ENCODE measurements at regions of chr1 and their contacts with region 1.

Region 1: DNA sequence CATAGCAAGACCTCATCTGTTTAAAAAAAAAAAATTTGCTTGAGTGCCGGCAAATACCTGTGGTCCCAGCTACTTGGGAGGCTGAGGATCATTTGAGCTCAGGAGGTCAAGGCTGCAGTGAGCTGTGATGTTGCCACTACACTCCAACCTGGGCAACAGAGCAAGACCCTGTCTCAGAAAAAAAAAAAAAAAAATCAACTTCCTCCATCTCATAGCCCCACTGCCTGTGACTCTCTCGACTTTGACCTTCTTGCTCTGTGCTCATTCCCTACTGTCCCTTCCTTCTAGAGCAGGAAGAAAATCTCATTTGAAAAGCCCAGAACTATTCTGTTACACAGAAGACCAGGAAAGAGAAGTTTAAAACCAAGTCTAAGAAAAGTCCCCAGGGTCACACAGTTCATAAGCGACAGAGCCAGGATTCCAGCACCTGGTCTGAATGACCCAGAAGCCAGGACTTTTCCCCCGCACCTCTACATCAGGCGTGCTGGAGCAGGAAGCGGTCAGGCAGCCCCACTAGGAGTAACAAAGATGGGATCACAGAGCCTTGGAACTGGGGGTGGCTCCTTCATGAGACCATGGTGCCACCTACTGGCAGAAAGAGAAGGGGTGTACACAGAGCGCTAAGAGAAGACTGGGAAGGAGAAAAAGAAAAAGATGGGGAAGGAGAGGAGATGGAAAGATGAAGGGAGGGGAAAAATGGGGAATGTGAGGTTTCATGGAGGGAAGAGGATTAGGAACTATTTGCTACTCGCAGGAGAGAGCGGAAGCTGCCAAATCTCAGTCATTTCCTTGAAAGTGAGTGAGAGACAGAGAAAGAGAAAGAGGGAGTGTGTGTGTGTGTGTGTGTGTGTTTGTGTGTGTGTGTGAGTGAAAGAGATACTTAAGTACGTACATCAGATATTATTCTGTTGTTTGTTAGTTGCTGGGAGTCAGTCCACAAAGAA is 3.1 kb upstream of the P3R3URF start:
- DNase-seq: peak; percentile 88
- H3K4me3 ChIP-seq: peak overlapping the region in 1 of 3 experiments; percentile 36
- H3K27ac ChIP-seq: peak overlapping the region; percentile 79
- H3K4me1 ChIP-seq: peaks cover 49% of the 10 kb centered on the region
- H3K27me3 ChIP-seq: no peaks in the 10 kb centered on the region
- CTCF ChIP-seq: peak; percentile 86 to 98

Region 2: DNA sequence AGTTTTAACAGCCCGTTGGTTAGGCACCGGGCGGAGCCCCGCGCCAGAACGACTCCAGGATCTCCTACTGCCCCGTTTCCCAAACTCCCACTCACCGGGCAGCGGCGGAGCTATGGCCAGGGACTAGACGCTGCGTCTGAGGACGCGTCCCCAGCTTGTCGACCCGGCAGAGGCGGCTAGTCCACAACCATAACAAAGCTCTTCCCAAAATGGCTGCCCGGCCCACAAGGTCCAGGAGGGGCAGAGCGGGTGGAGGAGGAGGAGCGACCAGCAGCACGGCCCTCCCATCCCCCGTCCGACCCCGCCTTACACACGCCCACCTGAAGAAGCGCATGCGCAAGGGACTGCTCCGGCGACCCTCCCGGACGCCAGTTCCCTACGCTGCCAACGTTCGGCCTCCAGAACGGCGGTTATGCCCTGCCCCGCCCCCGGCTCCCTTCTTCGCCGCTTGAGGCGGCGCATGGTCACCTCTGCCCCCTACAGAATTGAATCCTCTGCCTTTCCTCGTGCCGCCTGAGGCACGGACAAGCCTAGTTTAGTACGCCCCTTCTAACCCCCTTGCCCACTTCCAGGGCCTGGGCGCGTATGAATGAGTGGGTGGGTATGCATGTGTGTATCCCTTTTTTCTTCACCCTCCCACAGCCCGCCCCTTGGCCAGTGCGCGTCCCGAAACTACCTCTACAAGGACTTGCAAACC is 492.9 kb before region 1 on chr1 and contains the start of gene GPBP1L1:
- CTCF ChIA-PET with region 1: no interaction called
- dilution Hi-C with region 1: no loop called
- in situ Hi-C with region 1: loop called in 1 of 2 experiments (anchors 25 kb)
- intact Hi-C with region 1: loop called (anchors 5 kb)
- DNase-seq: peak; percentile 93
- H3K4me3 ChIP-seq: peak within 1 kb of the TSS; percentile 94 to 99 (median 97)
- H3K27ac ChIP-seq: peak within 1 kb of the TSS; percentile 93
- H3K4me1 ChIP-seq: peaks cover 9% of the 10 kb centered on the region
- H3K27me3 ChIP-seq: no peaks in the 10 kb centered on the region
- CTCF ChIP-seq: no peak
- total RNA-seq, gene GPBP1L1: 109 to 119 TPM

Region 3: GRCh38 chr1:46036894-46037839 is 142.2 kb before region 1 on chr1:
- CTCF ChIA-PET with region 1: interaction called, 9 read pairs
- dilution Hi-C with region 1: no loop called
- in situ Hi-C with region 1: loop called (anchors 5 kb)
- intact Hi-C with region 1: loop called (anchors 1 kb)
- DNase-seq: peak; percentile 65
- H3K4me3 ChIP-seq: no peak overlapping the region
- H3K27ac ChIP-seq: no peak overlapping the region
- H3K4me1 ChIP-seq: peaks cover 8% of the 10 kb centered on the region
- H3K27me3 ChIP-seq: no peaks in the 10 kb centered on the region
- CTCF ChIP-seq: peak; percentile 96 to 98

Region 4: GRCh38 chr1:46113948-46114347 is 65.5 kb before region 1 on chr1:
- CTCF ChIA-PET with region 1: no interaction called
- dilution Hi-C with region 1: loop called (anchors 5 kb)
- in situ Hi-C with region 1: no loop called
- intact Hi-C with region 1: no loop called
- DNase-seq: no peak
- H3K4me3 ChIP-seq: no peak overlapping the region
- H3K27ac ChIP-seq: no peak overlapping the region
- H3K4me1 ChIP-seq: no peaks in the 10 kb centered on the region
- H3K27me3 ChIP-seq: no peaks in the 10 kb centered on the region
- CTCF ChIP-seq: no peak

Region 5: DNA sequence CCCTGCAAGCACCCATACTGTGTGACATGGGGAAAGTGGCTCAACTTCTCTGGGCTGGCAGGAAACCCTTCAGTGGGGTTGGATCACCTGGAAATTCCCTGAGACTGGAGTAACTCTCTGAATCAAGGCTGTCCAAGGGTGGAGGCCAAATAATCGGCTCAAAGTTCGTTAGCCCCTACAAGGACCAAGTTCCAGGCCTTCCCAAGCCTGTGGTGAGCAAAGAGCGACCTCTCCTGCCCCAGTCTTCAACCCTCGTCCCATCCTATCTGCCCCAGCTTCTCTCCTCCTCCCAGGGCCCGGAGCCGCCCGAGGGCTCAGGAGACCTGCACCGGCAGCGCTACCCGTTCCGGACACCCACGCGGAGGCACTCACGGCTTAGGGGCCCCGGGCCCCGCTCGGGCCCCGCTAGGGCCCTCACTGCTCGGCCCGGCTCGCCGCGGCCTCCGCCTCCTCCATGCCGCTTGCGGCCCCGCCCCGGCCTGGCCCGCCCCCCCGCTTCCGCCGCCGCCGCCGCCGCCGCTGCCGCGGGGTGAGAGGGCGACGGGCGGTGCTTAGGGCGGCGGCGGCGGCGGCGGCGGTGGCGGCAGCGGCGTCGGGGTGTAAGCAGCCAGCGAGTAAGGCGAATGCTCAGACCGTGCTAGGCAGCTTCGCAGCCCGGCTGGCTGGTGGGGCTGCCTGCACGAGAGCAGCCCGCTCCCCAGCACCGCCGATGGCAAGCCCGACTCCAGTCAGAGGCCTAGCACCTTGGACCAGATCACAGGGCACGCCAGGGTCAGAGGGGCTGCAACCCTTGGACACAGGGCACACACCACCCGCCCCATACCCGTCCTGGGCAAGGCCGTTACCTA is 18.8 kb after region 1 on chr1 and contains the start of gene POMGNT1:
- CTCF ChIA-PET with region 1: interaction called, 3 read pairs
- dilution Hi-C with region 1: no loop called
- in situ Hi-C with region 1: no loop called
- intact Hi-C with region 1: loop called (anchors 1 kb)
- DNase-seq: peak; percentile 71
- H3K4me3 ChIP-seq: peak within 1 kb of the TSS; percentile 79 to 92 (median 91)
- H3K27ac ChIP-seq: peak within 1 kb of the TSS; percentile 69
- H3K4me1 ChIP-seq: peaks cover 19% of the 10 kb centered on the region
- H3K27me3 ChIP-seq: no peaks in the 10 kb centered on the region
- CTCF ChIP-seq: peak in 1 of 2 donors; percentile 38
- total RNA-seq, gene POMGNT1: 92.5 to 144 TPM

Region 6: GRCh38 chr1:46223472-46223943 is 44.1 kb after region 1 on chr1:
- CTCF ChIA-PET with region 1: interaction called, 13 read pairs
- dilution Hi-C with region 1: no loop called
- in situ Hi-C with region 1: loop called in 1 of 2 experiments (anchors 5 kb)
- intact Hi-C with region 1: loop called (anchors 1 kb)
- DNase-seq: peak; percentile 92
- H3K4me3 ChIP-seq: no peak overlapping the region
- H3K27ac ChIP-seq: no peak overlapping the region
- H3K4me1 ChIP-seq: peaks cover 17% of the 10 kb centered on the region
- H3K27me3 ChIP-seq: no peaks in the 10 kb centered on the region
- CTCF ChIP-seq: peak; percentile 91 to 98

Region 7: GRCh38 chr1:46303038-46303871 is 123.8 kb after region 1 on chr1 and contains the starts of genes LRRC41 and UQCRH:
- CTCF ChIA-PET with region 1: no interaction called
- dilution Hi-C with region 1: no loop called
- in situ Hi-C with region 1: no loop called
- intact Hi-C with region 1: loop called (anchors 2 kb)
- DNase-seq: peak; percentile 93
- H3K4me3 ChIP-seq: peak within 1 kb of the TSS; percentile 69 to 98 (median 94)
- H3K27ac ChIP-seq: peak within 1 kb of the TSS; percentile 92
- H3K4me1 ChIP-seq: peaks cover 24% of the 10 kb centered on the region
- H3K27me3 ChIP-seq: no peaks in the 10 kb centered on the region
- CTCF ChIP-seq: no peak
- total RNA-seq, gene LRRC41: 76.7 to 103 TPM
- total RNA-seq, gene UQCRH: 233 to 275 TPM